MCF 10A (cell line): ENCODE measurements at regions of chr1 and their contacts with region 1.

Region 1: GRCh38 chr1:154431586-154432373 is 26.6 kb downstream of the IL6R start:
- DNase-seq: peak; percentile 94
- H3K4me3 Mint-ChIP-seq: no peak overlapping the region
- H3K27ac Mint-ChIP-seq: peak overlapping the region; percentile 55
- H3K4me1 Mint-ChIP-seq: peaks cover 44% of the 10 kb centered on the region
- H3K27me3 Mint-ChIP-seq: no peaks in the 10 kb centered on the region
- CTCF ChIP-seq: no peak

Region 2: GRCh38 chr1:153916297-153916696 is 515.5 kb before region 1 on chr1:
- CTCF ChIA-PET with region 1: no interaction called
- POLR2A ChIA-PET with region 1: no interaction called
- intact Hi-C with region 1: no loop called
- DNase-seq: no peak
- H3K4me3 Mint-ChIP-seq: no peak overlapping the region
- H3K27ac Mint-ChIP-seq: no peak overlapping the region
- H3K4me1 Mint-ChIP-seq: peaks cover 43% of the 10 kb centered on the region
- H3K27me3 Mint-ChIP-seq: no peaks in the 10 kb centered on the region
- CTCF ChIP-seq: no peak

Region 3: GRCh38 chr1:154324669-154325582 is 106.9 kb before region 1 on chr1 and contains the start of gene ATP8B2:
- CTCF ChIA-PET with region 1: interaction called, 6 read pairs
- POLR2A ChIA-PET with region 1: interaction called, 3 read pairs
- intact Hi-C with region 1: loop called (anchors 2 kb)
- DNase-seq: peak; percentile 85
- H3K4me3 Mint-ChIP-seq: peak within 1 kb of the TSS; percentile 76
- H3K27ac Mint-ChIP-seq: peak within 1 kb of the TSS; percentile 77
- H3K4me1 Mint-ChIP-seq: peaks cover 31% of the 10 kb centered on the region
- H3K27me3 Mint-ChIP-seq: no peaks in the 10 kb centered on the region
- CTCF ChIP-seq: peak; percentile 99
- total RNA-seq, gene ATP8B2: 27.1 and 66.3 TPM in 2 replicates

Region 4: DNA sequence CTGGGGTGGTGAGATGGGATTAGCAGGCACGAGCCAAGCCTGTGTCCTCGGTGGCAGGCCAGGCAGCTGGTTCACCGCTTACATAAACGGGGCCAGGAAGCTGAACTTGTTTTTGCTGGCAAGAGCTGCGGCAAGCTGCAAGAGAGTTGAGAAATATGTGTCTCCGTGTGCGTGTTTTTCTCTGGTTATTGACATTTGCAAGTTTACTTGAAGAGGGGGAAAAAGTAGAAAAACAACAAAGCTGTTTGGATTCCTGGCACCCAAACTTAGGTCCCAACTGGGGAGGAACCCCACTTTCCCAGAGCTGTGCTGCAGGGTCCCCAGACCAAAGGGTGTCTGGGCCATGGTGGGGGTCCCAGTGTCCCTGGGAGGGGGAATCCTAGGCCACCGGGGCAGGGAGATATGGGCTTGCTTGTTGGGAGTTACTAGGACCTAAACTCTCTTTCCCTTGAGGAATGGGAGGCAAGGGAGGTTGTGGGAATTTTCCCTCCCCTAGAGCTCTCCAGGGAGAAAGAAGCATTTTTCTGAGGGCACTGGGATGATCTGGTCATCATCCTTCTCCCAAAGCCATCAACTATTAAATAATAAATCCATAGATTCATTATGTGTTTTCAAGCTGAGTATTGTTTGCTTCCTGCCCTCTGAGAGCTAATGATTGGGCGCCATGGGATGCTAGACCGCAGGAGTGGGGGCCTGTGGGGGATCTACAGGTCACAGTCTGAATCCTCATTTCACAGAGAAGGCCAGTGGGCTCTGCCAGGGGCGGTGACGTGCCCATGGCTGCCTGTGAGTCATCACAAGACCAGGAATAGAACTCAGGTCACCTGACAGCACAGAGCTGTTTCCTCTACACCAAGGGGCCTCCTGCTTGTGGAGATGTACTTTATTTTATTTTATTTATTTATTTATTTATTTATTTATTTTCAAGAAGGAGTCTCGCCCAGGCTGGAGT is 11.9 kb before region 1 on chr1:
- CTCF ChIA-PET with region 1: interaction called, 13 read pairs
- POLR2A ChIA-PET with region 1: interaction called, 1,077 read pairs
- intact Hi-C with region 1: loop called (anchors 1 kb)
- DNase-seq: peak; percentile 98
- H3K4me3 Mint-ChIP-seq: peak overlapping the region; percentile 59
- H3K27ac Mint-ChIP-seq: peak overlapping the region; percentile 67
- H3K4me1 Mint-ChIP-seq: peaks cover 85% of the 10 kb centered on the region
- H3K27me3 Mint-ChIP-seq: no peaks in the 10 kb centered on the region
- CTCF ChIP-seq: no peak

Region 5: GRCh38 chr1:154463512-154463990 is 31.8 kb after region 1 on chr1:
- CTCF ChIA-PET with region 1: interaction called, 5 read pairs
- POLR2A ChIA-PET with region 1: interaction called, 4 read pairs
- intact Hi-C with region 1: loop called (anchors 2 kb)
- DNase-seq: no peak
- H3K4me3 Mint-ChIP-seq: no peak overlapping the region
- H3K27ac Mint-ChIP-seq: peak overlapping the region; percentile 35
- H3K4me1 Mint-ChIP-seq: no peaks in the 10 kb centered on the region
- H3K27me3 Mint-ChIP-seq: no peaks in the 10 kb centered on the region
- CTCF ChIP-seq: no peak